ENCODE measurements at regions of chr11 and their contacts with region 1.

Region 1: GRCh38 chr11:10653926-10654810 is 39.4 kb downstream of the IRAG1 start:
- DNase-seq: peak; percentile 55
- ATAC-seq: peak; percentile 36
- H3K4me3 ChIP-seq: 0 out of 4 replicates have a peak overlapping the region, but pooled peaks of 1 of the 2 experiments have one; percentile 3
- H3K27ac ChIP-seq: peak overlapping the region; percentile 100
- H3K4me1 ChIP-seq: peaks cover 98 to 100% of the 10 kb centered on the region in 2 experiments
- H3K27me3 ChIP-seq: no peaks in the 10 kb centered on the region
- CTCF ChIP-seq: peak in 2 of 3 experiments; percentile 72 to 86; a peak in 4 of 6 replicates
- POLR2A ChIP-seq: no peak
- RAD21 ChIP-seq: no peak

Region 2: GRCh38 chr11:10514210-10514609 is 140.0 kb before region 1 on chr11:
- CTCF ChIA-PET with region 1: interaction called, 3 read pairs
- POLR2A ChIA-PET with region 1: no interaction called
- RAD21 ChIA-PET with region 1: no interaction called
- intact Hi-C with region 1: loop called (anchors 1 kb)
- DNase-seq: no peak
- ATAC-seq: no peak
- H3K4me3 ChIP-seq: no peak overlapping the region
- H3K27ac ChIP-seq: peak overlapping the region; percentile 63; the same call in 1 of the 2 replicates
- H3K4me1 ChIP-seq: peaks cover 23 to 55% of the 10 kb centered on the region in 2 experiments
- H3K27me3 ChIP-seq: no peaks in the 10 kb centered on the region
- CTCF ChIP-seq: peak; percentile 16 to 51 (median 39); a peak in 3 of 6 replicates
- POLR2A ChIP-seq: no peak
- RAD21 ChIP-seq: peak; percentile 47; the same call in 1 of the 2 replicates

Region 3: DNA sequence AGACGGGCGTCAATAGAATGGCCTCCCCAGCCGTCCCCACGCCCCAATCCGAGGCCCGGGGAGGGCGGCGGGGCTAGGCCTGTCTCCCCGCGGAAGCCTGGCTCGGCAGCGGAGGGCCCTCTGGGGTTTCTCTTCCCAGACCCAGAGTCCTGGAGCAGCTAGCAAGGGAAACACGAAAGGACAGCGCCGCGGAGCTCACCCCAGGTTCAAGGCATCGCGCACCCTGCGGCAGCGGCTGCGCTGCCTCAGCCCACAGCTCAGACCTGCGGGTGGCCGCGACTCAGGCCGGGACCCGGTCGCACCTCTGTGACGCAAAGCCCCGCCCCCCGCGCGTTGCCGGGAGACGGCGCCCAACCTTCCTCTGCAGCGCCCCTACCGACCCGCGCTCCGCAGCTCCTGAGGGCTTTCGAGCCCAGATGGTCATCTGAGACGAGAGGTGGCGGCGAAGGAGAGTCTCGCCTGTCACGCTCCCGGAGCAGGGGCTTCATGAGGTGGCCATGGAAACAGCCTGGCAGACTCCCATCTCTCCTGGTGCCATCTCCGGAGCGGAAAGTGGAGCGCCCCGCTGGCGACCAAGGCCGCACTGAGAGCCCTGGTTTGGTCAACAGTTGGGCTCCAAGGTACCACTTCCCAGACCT is 113.1 kb before region 1 on chr11 and contains the start of gene RNF141:
- CTCF ChIA-PET with region 1: interaction called, 6 read pairs
- POLR2A ChIA-PET with region 1: interaction called, 5 read pairs
- RAD21 ChIA-PET with region 1: no interaction called
- intact Hi-C with region 1: loop called (anchors 5 kb)
- DNase-seq: peak; percentile 84
- ATAC-seq: peak; percentile 89
- H3K4me3 ChIP-seq: peak within 1 kb of the TSS; percentile 76 to 83
- H3K27ac ChIP-seq: peak within 1 kb of the TSS; percentile 94
- H3K4me1 ChIP-seq: peaks cover 40 to 54% of the 10 kb centered on the region in 2 experiments
- H3K27me3 ChIP-seq: no peaks in the 10 kb centered on the region
- CTCF ChIP-seq: peak; percentile 57 to 83 (median 67); a peak in 5 of 6 replicates
- POLR2A ChIP-seq: peak; percentile 91
- RAD21 ChIP-seq: peak; percentile 53
- total RNA-seq, gene RNF141: 133 TPM

Region 4: GRCh38 chr11:10623797-10624761 is 30.1 kb before region 1 on chr11:
- CTCF ChIA-PET with region 1: interaction called, 18 read pairs
- POLR2A ChIA-PET with region 1: interaction called, 3 read pairs
- RAD21 ChIA-PET with region 1: interaction called, 5 read pairs
- intact Hi-C with region 1: no loop called
- DNase-seq: peak; percentile 43
- ATAC-seq: peak; percentile 78
- H3K4me3 ChIP-seq: no peak overlapping the region
- H3K27ac ChIP-seq: peak overlapping the region; percentile 65
- H3K4me1 ChIP-seq: peaks cover 31 to 74% of the 10 kb centered on the region in 2 experiments
- H3K27me3 ChIP-seq: no peaks in the 10 kb centered on the region
- CTCF ChIP-seq: peak; percentile 73 to 87 (median 74); a peak in 5 of 6 replicates
- POLR2A ChIP-seq: no peak
- RAD21 ChIP-seq: peak; percentile 93

Region 5: GRCh38 chr11:10666556-10667523 is 12.7 kb after region 1 on chr11:
- CTCF ChIA-PET with region 1: interaction called, 23 read pairs
- POLR2A ChIA-PET with region 1: interaction called, 9 read pairs
- RAD21 ChIA-PET with region 1: no interaction called
- intact Hi-C with region 1: no loop called
- DNase-seq: no peak
- ATAC-seq: peak; percentile 17; the same call in 1 of the 2 replicates
- H3K4me3 ChIP-seq: no peak overlapping the region
- H3K27ac ChIP-seq: peak overlapping the region; percentile 100
- H3K4me1 ChIP-seq: peaks cover 56 to 96% of the 10 kb centered on the region in 2 experiments
- H3K27me3 ChIP-seq: no peaks in the 10 kb centered on the region
- CTCF ChIP-seq: no peak
- POLR2A ChIP-seq: no peak
- RAD21 ChIP-seq: no peak

Region 6: DNA sequence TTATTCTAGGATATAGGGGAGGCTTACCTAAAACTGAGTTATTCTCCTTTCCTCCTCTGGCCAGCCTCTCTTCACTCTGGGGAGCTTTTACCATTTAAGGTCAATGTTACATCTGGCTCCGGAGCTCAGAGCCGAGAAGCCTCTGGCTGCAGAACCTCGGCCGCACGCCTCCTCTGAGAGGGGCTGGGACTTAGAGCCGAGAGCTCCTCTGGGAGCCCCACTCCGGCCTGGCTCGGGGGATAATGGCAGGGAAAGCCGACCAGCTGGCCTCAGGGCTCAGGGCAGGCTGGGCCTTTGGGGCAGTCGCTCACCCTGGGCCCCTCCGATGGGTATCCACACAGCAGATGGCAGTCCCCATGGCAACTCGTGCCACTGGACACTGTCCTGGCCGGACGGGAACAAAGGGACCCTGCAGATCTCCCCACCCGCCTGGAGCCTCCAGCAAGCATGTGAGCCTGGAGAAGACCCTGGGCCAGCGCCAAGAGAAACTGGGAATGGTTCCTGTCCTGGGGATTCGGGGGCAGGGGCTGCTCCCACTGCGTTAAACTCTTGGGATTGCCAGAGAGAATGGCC is 39.4 kb after region 1 on chr11 and contains the start of gene IRAG1:
- CTCF ChIA-PET with region 1: no interaction called
- POLR2A ChIA-PET with region 1: no interaction called
- RAD21 ChIA-PET with region 1: no interaction called
- intact Hi-C with region 1: no loop called
- DNase-seq: no peak
- ATAC-seq: no peak
- H3K4me3 ChIP-seq: no peak within 1 kb of the TSS
- H3K27ac ChIP-seq: no peak within 1 kb of the TSS; the same call in 1 of the 2 replicates
- H3K4me1 ChIP-seq: peaks cover 5 to 52% of the 10 kb centered on the region in 2 experiments
- H3K27me3 ChIP-seq: no peaks in the 10 kb centered on the region
- CTCF ChIP-seq: no peak
- POLR2A ChIP-seq: no peak
- RAD21 ChIP-seq: no peak
- total RNA-seq, gene IRAG1: 3.7 TPM